ENCODE measurements at regions of chr19 and their contacts with region 1.

Region 1: DNA sequence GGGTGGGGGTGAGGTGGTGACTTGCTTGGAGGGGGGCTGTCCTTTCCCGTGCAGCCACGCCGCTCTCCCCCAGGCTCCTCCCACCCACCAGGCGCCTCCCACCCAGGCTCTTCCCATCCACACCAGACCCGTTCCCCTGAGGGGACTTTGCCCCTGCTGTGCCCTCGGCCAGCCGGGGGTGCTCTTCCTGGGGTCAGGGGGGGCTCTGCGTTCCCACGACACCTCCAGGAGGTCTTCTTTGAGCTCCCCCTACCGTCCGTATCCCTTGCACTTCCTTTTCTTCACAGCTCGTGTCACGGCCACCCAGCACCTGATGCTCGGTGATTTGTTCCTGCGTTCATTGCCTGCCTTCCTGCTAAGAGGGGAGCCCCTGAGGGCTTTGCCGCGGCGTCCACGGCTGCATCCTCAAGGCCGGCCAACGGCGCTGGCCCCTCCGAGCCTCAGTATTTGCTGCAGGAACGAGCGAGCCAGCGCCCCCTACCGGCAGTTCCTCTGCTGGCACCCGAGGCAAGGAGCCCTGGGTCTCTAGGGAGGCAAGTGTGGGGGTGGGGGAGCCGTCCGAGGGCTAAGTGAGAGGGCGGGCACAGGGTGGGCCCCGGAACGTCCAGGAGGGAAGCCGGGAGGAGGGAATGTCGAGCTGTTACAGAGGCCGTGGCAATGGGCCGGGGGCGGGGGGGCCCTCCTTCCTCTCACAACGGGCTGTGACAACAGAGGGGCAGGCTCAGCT is 11.8 kb downstream of the LRRC4B start:
- DNase-seq: peak; percentile 82
- ATAC-seq: peak; percentile 87
- H3K4me3 Mint-ChIP-seq: peak overlapping the region; percentile 83
- H3K27ac Mint-ChIP-seq: no peak overlapping the region
- H3K4me1 Mint-ChIP-seq: peaks cover 4% of the 10 kb centered on the region
- H3K27me3 Mint-ChIP-seq: peaks cover 37% of the 10 kb centered on the region

Region 2: GRCh38 chr19:50357178-50358100 is 199.0 kb before region 1 on chr19:
- CTCF ChIA-PET with region 1: interaction called, 13 read pairs
- POLR2A ChIA-PET with region 1: no interaction called
- DNase-seq: peak; percentile 89
- ATAC-seq: peak; percentile 86
- H3K4me3 Mint-ChIP-seq: peak overlapping the region; percentile 86
- H3K27ac Mint-ChIP-seq: peak overlapping the region; percentile 95
- H3K4me1 Mint-ChIP-seq: peaks cover 47% of the 10 kb centered on the region
- H3K27me3 Mint-ChIP-seq: peaks cover 4% of the 10 kb centered on the region

Region 3: GRCh38 chr19:50368649-50369570 is 187.5 kb before region 1 on chr19:
- CTCF ChIA-PET with region 1: interaction called, 11 read pairs
- POLR2A ChIA-PET with region 1: no interaction called
- DNase-seq: peak; percentile 83
- ATAC-seq: peak; percentile 72
- H3K4me3 Mint-ChIP-seq: peak overlapping the region; percentile 83
- H3K27ac Mint-ChIP-seq: peak overlapping the region; percentile 85
- H3K4me1 Mint-ChIP-seq: peaks cover 36% of the 10 kb centered on the region
- H3K27me3 Mint-ChIP-seq: no peaks in the 10 kb centered on the region

Region 4: DNA sequence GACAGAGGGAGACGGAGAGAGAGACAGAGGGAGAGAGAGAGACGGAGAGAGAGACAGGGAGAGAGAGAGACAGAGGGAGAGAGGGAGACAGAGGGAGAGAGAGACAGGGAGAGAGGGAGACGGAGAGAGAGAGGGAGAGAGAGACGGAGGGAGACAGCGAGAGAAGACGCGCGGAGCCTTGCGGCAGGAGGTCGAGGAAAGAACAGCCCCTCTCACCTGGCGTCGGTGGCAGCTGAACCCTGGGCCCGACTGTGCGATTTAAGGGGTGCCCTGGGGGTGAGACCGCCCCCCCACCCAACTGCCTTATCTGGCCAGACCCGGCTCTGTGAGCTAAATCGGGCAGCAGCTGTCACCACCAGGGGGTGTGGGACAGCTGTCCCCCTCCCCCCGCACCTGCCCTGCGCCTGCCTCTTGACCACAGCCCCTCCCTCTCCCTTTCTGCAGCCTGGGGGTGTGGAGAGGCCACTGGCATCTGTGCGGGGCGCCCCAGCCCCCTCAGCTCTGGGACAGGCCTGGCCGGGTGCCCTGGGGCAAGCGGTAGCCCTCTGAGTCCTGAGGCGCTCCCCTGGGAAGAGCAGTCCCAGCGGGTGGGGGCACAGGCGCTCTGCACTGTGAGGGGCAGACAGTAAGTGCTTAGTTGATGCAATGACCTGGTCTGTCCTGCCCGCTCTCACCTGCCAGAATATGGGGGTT is 56.2 kb before region 1 on chr19:
- CTCF ChIA-PET with region 1: no interaction called
- POLR2A ChIA-PET with region 1: no interaction called
- DNase-seq: peak; percentile 50
- ATAC-seq: peak; percentile 39
- H3K4me3 Mint-ChIP-seq: no peak overlapping the region
- H3K27ac Mint-ChIP-seq: no peak overlapping the region
- H3K4me1 Mint-ChIP-seq: no peaks in the 10 kb centered on the region
- H3K27me3 Mint-ChIP-seq: no peaks in the 10 kb centered on the region

Region 5: DNA sequence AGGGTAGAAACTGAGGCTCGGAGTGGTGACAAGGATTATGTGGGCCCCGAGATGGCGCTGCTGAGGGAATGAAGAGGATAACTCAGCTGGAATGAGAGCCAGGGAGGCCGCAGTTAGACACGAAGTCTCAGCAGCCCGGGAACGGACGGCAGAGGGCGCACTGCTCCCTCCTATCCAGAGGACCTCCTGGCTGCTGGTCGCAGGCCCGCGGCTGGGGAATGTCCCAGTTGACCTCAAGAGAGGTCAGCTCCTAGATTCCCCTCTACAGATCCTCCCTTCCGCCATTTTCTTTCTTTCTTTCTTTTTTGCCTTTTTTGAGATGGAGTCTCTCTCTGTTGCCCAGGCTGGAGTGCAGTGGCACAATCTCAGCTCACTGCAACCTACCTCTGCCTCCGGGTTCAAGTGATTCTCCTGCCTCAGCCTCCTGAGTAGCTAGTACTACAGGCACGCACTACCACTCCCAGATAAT is 18.6 kb before region 1 on chr19:
- CTCF ChIA-PET with region 1: interaction called, 58 read pairs
- POLR2A ChIA-PET with region 1: no interaction called
- DNase-seq: peak; percentile 72
- ATAC-seq: peak; percentile 65
- H3K4me3 Mint-ChIP-seq: no peak overlapping the region
- H3K27ac Mint-ChIP-seq: no peak overlapping the region
- H3K4me1 Mint-ChIP-seq: no peaks in the 10 kb centered on the region
- H3K27me3 Mint-ChIP-seq: no peaks in the 10 kb centered on the region

Region 6: GRCh38 chr19:50542943-50543342 is 13.5 kb before region 1 on chr19:
- CTCF ChIA-PET with region 1: interaction called, 58 read pairs
- POLR2A ChIA-PET with region 1: no interaction called
- DNase-seq: no peak
- ATAC-seq: no peak
- H3K4me3 Mint-ChIP-seq: no peak overlapping the region
- H3K27ac Mint-ChIP-seq: no peak overlapping the region
- H3K4me1 Mint-ChIP-seq: no peaks in the 10 kb centered on the region
- H3K27me3 Mint-ChIP-seq: no peaks in the 10 kb centered on the region

Region 7: GRCh38 chr19:50568321-50569075 is 12.1 kb after region 1 on chr19 and contains the start of gene LRRC4B:
- CTCF ChIA-PET with region 1: interaction called, 11 read pairs
- POLR2A ChIA-PET with region 1: no interaction called
- DNase-seq: no peak
- ATAC-seq: no peak
- H3K4me3 Mint-ChIP-seq: no peak within 1 kb of the TSS
- H3K27ac Mint-ChIP-seq: no peak within 1 kb of the TSS
- H3K4me1 Mint-ChIP-seq: peaks cover 3% of the 10 kb centered on the region
- H3K27me3 Mint-ChIP-seq: peaks cover 42% of the 10 kb centered on the region
- total RNA-seq, gene LRRC4B: not detected

Region 8: DNA sequence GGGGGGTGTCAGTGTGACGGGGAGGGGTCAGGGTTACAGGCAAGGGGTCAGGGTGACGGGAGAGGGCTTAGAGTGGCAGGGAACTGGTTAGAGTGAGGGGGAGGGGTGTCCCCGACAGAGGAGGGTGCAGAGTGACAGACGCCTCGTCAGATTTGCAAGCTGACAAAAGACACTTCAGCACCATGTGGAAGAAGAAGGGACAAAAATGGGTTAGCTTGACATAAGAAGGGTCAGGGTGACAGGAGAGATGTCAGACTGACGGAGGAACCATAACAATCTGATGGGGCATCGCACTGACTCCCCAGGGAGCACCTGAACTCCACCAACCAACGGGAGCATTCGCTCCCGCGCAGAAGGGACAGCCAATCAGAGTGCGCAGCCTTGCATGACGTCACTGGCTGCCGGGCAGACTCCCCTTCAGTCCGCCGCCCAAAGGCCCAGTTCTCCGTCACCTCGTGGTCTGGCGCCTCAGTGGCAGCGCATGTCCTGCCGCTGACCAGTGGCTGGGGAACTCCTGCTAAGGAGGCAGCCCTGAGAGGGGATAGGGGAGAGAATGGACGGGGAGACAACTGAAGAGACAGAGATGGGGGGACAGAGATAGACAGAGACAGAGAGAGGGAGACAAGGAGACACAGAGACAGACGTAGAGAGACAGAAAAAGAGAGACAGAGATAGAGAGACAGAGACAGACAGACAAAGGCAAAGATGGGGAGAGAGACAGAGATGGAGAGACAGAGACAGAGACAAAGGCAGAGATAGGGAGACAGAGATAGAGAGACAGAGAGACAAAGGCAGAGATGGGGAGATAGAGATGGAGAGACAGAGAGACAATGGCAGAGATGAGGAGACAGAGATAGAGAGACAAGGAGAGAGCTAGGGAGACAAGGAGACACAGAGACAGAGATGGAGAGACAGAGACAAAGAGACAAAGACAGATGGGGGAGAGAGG is 123.0 kb after region 1 on chr19:
- CTCF ChIA-PET with region 1: no interaction called
- POLR2A ChIA-PET with region 1: no interaction called
- DNase-seq: peak; percentile 85
- ATAC-seq: peak; percentile 96
- H3K4me3 Mint-ChIP-seq: no peak overlapping the region
- H3K27ac Mint-ChIP-seq: no peak overlapping the region
- H3K4me1 Mint-ChIP-seq: peaks cover 4% of the 10 kb centered on the region
- H3K27me3 Mint-ChIP-seq: peaks cover 15% of the 10 kb centered on the region